B cell (primary cell): ENCODE measurements at regions of chr14 and their contacts with region 1.

Region 1: GRCh38 chr14:62126879-62127478 is 364.8 kb downstream of the SNAPC1 start:
- DNase-seq: peak; percentile 79
- ATAC-seq: peak; percentile 73
- H3K4me3 ChIP-seq: no peak overlapping the region
- H3K4me3 Mint-ChIP-seq: no peak overlapping the region
- H3K27ac ChIP-seq: no peak overlapping the region
- H3K27ac Mint-ChIP-seq: no peak overlapping the region
- H3K4me1 ChIP-seq: peaks cover 9 to 14% of the 10 kb centered on the region in 2 donors
- H3K4me1 Mint-ChIP-seq: peaks cover 37% of the 10 kb centered on the region
- H3K27me3 ChIP-seq: no peaks in the 10 kb centered on the region
- H3K27me3 Mint-ChIP-seq: no peaks in the 10 kb centered on the region
- CTCF ChIP-seq: peak; percentile 95

Region 2: GRCh38 chr14:61296719-61297502 is 830.1 kb before region 1 on chr14:
- CTCF ChIA-PET with region 1: interaction called, 5 read pairs
- POLR2A ChIA-PET with region 1: no interaction called
- intact Hi-C with region 1: loop called (anchors 5 kb)
- DNase-seq: peak; percentile 36
- ATAC-seq: no peak
- H3K4me3 ChIP-seq: no peak overlapping the region
- H3K4me3 Mint-ChIP-seq: no peak overlapping the region
- H3K27ac ChIP-seq: no peak overlapping the region
- H3K27ac Mint-ChIP-seq: no peak overlapping the region
- H3K4me1 ChIP-seq: no peaks in the 10 kb centered on the region
- H3K4me1 Mint-ChIP-seq: no peaks in the 10 kb centered on the region
- H3K27me3 ChIP-seq: no peaks in the 10 kb centered on the region
- H3K27me3 Mint-ChIP-seq: peaks cover 10% of the 10 kb centered on the region
- CTCF ChIP-seq: peak; percentile 73

Region 3: GRCh38 chr14:61730756-61731373 is 396.1 kb before region 1 on chr14:
- CTCF ChIA-PET with region 1: no interaction called
- POLR2A ChIA-PET with region 1: no interaction called
- intact Hi-C with region 1: no loop called
- DNase-seq: peak; percentile 51
- ATAC-seq: no peak
- H3K4me3 ChIP-seq: no peak overlapping the region
- H3K4me3 Mint-ChIP-seq: no peak overlapping the region
- H3K27ac ChIP-seq: peak overlapping the region in 1 of 2 donors; percentile 50
- H3K27ac Mint-ChIP-seq: peak overlapping the region; percentile 68
- H3K4me1 ChIP-seq: peaks cover 12% of the 10 kb centered on the region in 2 donors
- H3K4me1 Mint-ChIP-seq: peaks cover 42% of the 10 kb centered on the region
- H3K27me3 ChIP-seq: no peaks in the 10 kb centered on the region
- H3K27me3 Mint-ChIP-seq: no peaks in the 10 kb centered on the region
- CTCF ChIP-seq: peak; percentile 68

Region 4: GRCh38 chr14:61750708-61751474 is 376.1 kb before region 1 on chr14:
- CTCF ChIA-PET with region 1: interaction called, 3 read pairs
- POLR2A ChIA-PET with region 1: no interaction called
- intact Hi-C with region 1: loop called (anchors 10 kb)
- DNase-seq: peak; percentile 91
- ATAC-seq: peak; percentile 91
- H3K4me3 ChIP-seq: peak overlapping the region; percentile 47 to 71 (median 59)
- H3K4me3 Mint-ChIP-seq: peak overlapping the region; percentile 92
- H3K27ac ChIP-seq: peak overlapping the region; percentile 47 to 73
- H3K27ac Mint-ChIP-seq: peak overlapping the region; percentile 93
- H3K4me1 ChIP-seq: peaks cover 25 to 27% of the 10 kb centered on the region in 2 donors
- H3K4me1 Mint-ChIP-seq: peaks cover 42% of the 10 kb centered on the region
- H3K27me3 ChIP-seq: no peaks in the 10 kb centered on the region
- H3K27me3 Mint-ChIP-seq: no peaks in the 10 kb centered on the region
- CTCF ChIP-seq: no peak

Region 5: GRCh38 chr14:61894452-61895077 is 232.4 kb before region 1 on chr14:
- CTCF ChIA-PET with region 1: interaction called, 126 read pairs
- POLR2A ChIA-PET with region 1: interaction called, 4 read pairs
- intact Hi-C with region 1: loop called (anchors 1 kb)
- DNase-seq: peak; percentile 70
- ATAC-seq: no peak
- H3K4me3 ChIP-seq: no peak overlapping the region
- H3K4me3 Mint-ChIP-seq: no peak overlapping the region
- H3K27ac ChIP-seq: no peak overlapping the region
- H3K27ac Mint-ChIP-seq: peak overlapping the region; percentile 18
- H3K4me1 ChIP-seq: peaks cover 24 to 36% of the 10 kb centered on the region in 2 donors
- H3K4me1 Mint-ChIP-seq: peaks cover 36% of the 10 kb centered on the region
- H3K27me3 ChIP-seq: no peaks in the 10 kb centered on the region
- H3K27me3 Mint-ChIP-seq: no peaks in the 10 kb centered on the region
- CTCF ChIP-seq: peak; percentile 86

Region 6: GRCh38 chr14:62081012-62081612 is 45.9 kb before region 1 on chr14:
- CTCF ChIA-PET with region 1: interaction called, 27 read pairs
- POLR2A ChIA-PET with region 1: no interaction called
- intact Hi-C with region 1: loop called (anchors 2 kb)
- DNase-seq: peak; percentile 84
- ATAC-seq: peak; percentile 79
- H3K4me3 ChIP-seq: peak overlapping the region in 3 of 5 experiments; percentile 2 to 43 (median 25)
- H3K4me3 Mint-ChIP-seq: peak overlapping the region; percentile 58
- H3K27ac ChIP-seq: peak overlapping the region; percentile 82 to 94
- H3K27ac Mint-ChIP-seq: peak overlapping the region; percentile 88
- H3K4me1 ChIP-seq: peaks cover 74% of the 10 kb centered on the region in 2 donors
- H3K4me1 Mint-ChIP-seq: peaks cover 79% of the 10 kb centered on the region
- H3K27me3 ChIP-seq: no peaks in the 10 kb centered on the region
- H3K27me3 Mint-ChIP-seq: no peaks in the 10 kb centered on the region
- CTCF ChIP-seq: no peak